ENCODE measurements at regions of chr11 and their contacts with region 1.

Region 1: GRCh38 chr11:15216678-15217077 is 102.0 kb downstream of the INSC start:
- DNase-seq: no peak
- H3K4me3 ChIP-seq: no peak overlapping the region
- H3K27ac ChIP-seq: no peak overlapping the region
- H3K4me1 ChIP-seq: no peaks in the 10 kb centered on the region; a peak in 1 of 7 replicates
- H3K27me3 ChIP-seq: no peaks in the 10 kb centered on the region
- CTCF ChIP-seq: peak; percentile 62 to 69 (median 69)
- EP300 ChIP-seq: no peak
- POLR2A ChIP-seq: no peak
- RAD21 ChIP-seq: peak; percentile 47 to 58

Region 2: GRCh38 chr11:15195454-15196200 is 21.1 kb before region 1 on chr11:
- CTCF ChIA-PET with region 1: interaction called, 16 read pairs
- POLR2A ChIA-PET with region 1: no interaction called
- DNase-seq: peak in 1 of 2 experiments; percentile 22
- H3K4me3 ChIP-seq: no peak overlapping the region
- H3K27ac ChIP-seq: no peak overlapping the region
- H3K4me1 ChIP-seq: no peaks in the 10 kb centered on the region
- H3K27me3 ChIP-seq: no peaks in the 10 kb centered on the region; a peak in 1 of 7 replicates
- CTCF ChIP-seq: no peak
- EP300 ChIP-seq: no peak
- POLR2A ChIP-seq: no peak
- RAD21 ChIP-seq: no peak

Measured in H1 (cell line).